ENCODE measurements at regions of chr1 and their contacts with region 1.

Region 1: GRCh38 chr1:30707412-30708360 is 15.7 kb downstream of the MATN1 start:
- DNase-seq: peak; percentile 49
- H3K4me3 ChIP-seq: no peak overlapping the region
- H3K27ac ChIP-seq: no peak overlapping the region
- H3K4me1 ChIP-seq: peaks cover 11% of the 10 kb centered on the region
- H3K27me3 ChIP-seq: no peaks in the 10 kb centered on the region
- CTCF ChIP-seq: peak; percentile 93 to 98

Region 2: DNA sequence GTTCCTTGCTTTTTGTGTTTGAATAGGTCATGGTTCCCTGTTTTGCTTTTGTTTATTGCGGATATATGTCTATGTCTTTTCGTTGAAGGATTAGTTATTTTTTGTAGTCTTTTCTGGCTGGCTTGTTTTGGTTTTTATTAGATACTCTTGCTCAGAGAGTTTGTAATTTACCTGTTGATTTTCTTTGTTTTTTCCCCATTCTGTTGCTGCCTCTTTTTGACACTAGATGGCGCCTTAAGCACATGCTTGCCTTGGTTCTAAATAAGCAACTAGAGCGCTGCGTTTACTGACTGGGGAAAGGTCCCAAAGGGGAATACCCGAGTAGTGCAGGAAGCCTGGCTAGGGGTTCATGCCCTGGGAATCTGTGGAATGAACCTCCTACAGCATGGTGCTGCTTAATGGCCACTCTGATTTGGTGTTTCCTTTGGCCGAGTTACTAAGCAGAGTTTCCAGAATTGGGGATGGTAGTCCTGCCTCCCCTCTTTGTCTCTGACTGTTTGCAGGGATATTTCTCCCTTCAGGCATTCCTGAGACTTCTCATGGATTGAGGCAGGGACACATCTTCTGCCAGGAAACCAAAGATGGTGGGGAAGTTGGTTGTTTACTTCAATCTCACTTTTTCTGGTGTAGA is 1328.1 kb before region 1 on chr1:
- CTCF ChIA-PET with region 1: interaction called, 3 read pairs
- dilution Hi-C with region 1: no loop called
- in situ Hi-C with region 1: no loop called
- intact Hi-C with region 1: loop called (anchors 5 kb)
- DNase-seq: peak; percentile 55
- H3K4me3 ChIP-seq: no peak overlapping the region
- H3K27ac ChIP-seq: no peak overlapping the region
- H3K4me1 ChIP-seq: peaks cover 18% of the 10 kb centered on the region
- H3K27me3 ChIP-seq: no peaks in the 10 kb centered on the region
- CTCF ChIP-seq: peak; percentile 80 to 90

Region 3: DNA sequence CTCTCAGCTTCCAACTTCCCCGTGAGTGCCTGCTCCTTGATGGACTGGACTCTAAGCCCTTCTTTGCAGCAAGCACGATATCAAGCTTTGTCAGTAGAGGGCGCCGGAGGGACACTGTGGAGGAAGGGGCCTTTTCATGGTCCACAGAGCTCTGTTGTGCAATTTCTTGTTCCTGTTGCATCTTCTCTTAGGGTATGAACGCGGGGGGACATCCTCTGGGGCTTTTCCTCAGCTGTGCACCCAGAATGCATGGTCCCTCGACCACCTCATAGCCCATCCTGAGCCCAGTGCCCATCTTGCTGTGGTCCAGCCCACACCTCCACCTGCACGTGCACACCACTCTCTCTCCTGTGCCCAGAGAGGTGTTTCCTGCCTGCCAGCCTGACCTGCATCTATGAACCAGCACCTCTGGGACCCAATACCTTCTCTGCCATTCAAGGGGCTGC is 914.6 kb before region 1 on chr1:
- CTCF ChIA-PET with region 1: no interaction called
- dilution Hi-C with region 1: no loop called
- in situ Hi-C with region 1: no loop called
- intact Hi-C with region 1: loop called (anchors 1 kb)
- DNase-seq: peak; percentile 65
- H3K4me3 ChIP-seq: no peak overlapping the region
- H3K27ac ChIP-seq: no peak overlapping the region
- H3K4me1 ChIP-seq: peaks cover 9% of the 10 kb centered on the region
- H3K27me3 ChIP-seq: peaks cover 3% of the 10 kb centered on the region
- CTCF ChIP-seq: peak; percentile 94 to 97

Region 4: DNA sequence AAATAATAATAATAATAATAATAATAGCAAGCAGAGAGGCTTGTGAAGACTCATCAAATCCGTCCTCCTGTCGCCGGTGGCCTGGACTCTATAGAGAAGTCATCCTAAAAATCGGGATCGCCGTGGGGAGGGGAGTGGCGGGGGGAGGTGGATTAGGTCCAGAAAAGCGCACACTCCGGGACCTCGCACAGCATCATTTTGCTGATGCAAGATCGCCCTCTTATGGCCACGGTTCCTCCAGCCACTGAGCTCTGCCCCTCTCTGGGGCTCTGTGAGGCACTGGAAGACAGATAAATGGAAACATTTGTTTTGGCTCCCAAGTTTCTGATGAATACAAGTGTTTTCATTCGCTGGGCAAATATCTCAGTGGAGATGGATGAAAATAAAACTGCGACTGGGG is 596.3 kb before region 1 on chr1:
- CTCF ChIA-PET with region 1: no interaction called
- dilution Hi-C with region 1: no loop called
- in situ Hi-C with region 1: no loop called
- intact Hi-C with region 1: loop called (anchors 1 kb)
- DNase-seq: peak; percentile 16
- H3K4me3 ChIP-seq: no peak overlapping the region
- H3K27ac ChIP-seq: no peak overlapping the region
- H3K4me1 ChIP-seq: no peaks in the 10 kb centered on the region
- H3K27me3 ChIP-seq: no peaks in the 10 kb centered on the region
- CTCF ChIP-seq: peak; percentile 43 to 69

Region 5: GRCh38 chr1:30353637-30354036 is 354.0 kb before region 1 on chr1:
- CTCF ChIA-PET with region 1: no interaction called
- dilution Hi-C with region 1: no loop called
- in situ Hi-C with region 1: no loop called
- intact Hi-C with region 1: loop called (anchors 1 kb)
- DNase-seq: no peak
- H3K4me3 ChIP-seq: no peak overlapping the region
- H3K27ac ChIP-seq: no peak overlapping the region
- H3K4me1 ChIP-seq: no peaks in the 10 kb centered on the region
- H3K27me3 ChIP-seq: no peaks in the 10 kb centered on the region
- CTCF ChIP-seq: peak; percentile 26 to 68

Region 6: GRCh38 chr1:30695439-30695841 is 12.2 kb before region 1 on chr1:
- CTCF ChIA-PET with region 1: no interaction called
- dilution Hi-C with region 1: no loop called
- in situ Hi-C with region 1: no loop called
- intact Hi-C with region 1: no loop called
- DNase-seq: no peak
- H3K4me3 ChIP-seq: no peak overlapping the region
- H3K27ac ChIP-seq: no peak overlapping the region
- H3K4me1 ChIP-seq: peaks cover under 1% of the 10 kb centered on the region
- H3K27me3 ChIP-seq: no peaks in the 10 kb centered on the region
- CTCF ChIP-seq: no peak

Measured in mammary epithelial cell (primary cell).